Heart left ventricle (tissue), 16 donors: ENCODE measurements at regions of chr13 and their contacts with region 1.

Region 1: DNA sequence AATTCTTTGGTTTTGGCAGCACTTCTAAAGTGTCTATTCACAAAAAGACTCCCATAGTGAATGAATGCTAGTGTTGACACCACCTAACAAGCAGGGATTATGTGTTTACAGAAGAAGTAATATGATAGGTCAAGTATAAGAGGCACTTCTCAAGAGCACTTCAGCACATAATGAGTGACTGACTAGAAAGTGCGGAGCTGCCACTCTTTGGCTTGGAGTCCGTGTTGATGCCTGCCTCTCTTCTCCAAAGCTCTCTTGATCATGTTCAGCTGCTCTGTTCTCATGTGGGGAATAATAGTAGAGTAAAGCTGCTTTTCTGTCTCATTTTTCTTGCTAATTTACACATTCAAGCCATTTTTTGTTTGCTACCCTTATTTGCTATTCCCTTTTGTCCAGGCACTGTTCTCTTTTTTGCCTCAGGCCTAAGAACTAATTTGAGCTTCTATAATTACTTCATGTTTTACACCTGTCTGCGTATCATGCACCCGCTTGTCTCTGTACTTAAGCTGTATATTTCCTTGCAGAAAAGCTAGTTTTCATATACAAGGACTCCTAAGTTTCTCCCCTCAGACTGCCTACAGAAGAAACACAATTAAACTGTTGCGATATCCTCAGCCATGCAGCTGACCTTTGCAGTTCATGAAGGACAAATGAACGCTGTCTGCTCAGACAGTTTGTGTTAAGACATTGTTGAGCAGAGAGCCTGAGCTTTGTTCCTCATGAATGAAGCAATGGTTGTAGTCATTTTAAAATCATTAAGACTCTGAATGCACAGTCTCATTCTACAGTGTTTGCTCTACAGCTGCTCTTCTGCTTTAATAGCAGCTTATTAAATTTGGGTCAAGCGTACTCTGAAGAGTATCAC is 22.9 kb upstream of the MAB21L1 start:
- DNase-seq: peak in 1 of 5 donors; percentile 46
- ATAC-seq: peak; percentile 55 to 93 (median 80)
- H3K4me3 ChIP-seq: no peak overlapping the region
- H3K27ac ChIP-seq: no peak overlapping the region
- H3K4me1 ChIP-seq: peaks cover 0 to 13% (median 0%) of the 10 kb centered on the region in 12 donors
- H3K27me3 ChIP-seq: no peaks in the 10 kb centered on the region
- CTCF ChIP-seq: no peak
- POLR2A ChIP-seq: no peak

Region 2: DNA sequence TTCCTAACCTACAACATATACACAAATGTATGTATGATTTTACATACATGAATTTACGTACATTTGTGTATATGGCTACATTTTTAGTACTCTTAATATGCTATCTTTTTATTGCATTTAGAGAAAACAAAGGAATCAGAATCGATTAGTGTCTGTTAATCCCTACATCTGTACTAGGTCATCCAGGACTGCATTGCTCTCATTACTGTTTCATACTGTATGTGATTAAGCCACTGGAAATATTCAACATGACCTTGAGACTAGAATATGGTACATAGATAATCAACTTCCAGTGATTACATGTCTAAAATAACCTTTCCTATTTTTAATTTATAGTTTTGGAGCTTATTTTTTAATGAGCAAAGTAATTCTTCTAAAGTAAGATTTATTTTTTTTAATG is 17.7 kb before region 1 on chr13:
- intact Hi-C with region 1: loop called in 1 of 10 experiments (anchors 2 kb)
- DNase-seq: no peak
- ATAC-seq: no peak
- H3K4me3 ChIP-seq: no peak overlapping the region
- H3K27ac ChIP-seq: no peak overlapping the region
- H3K4me1 ChIP-seq: no peaks in the 10 kb centered on the region
- H3K27me3 ChIP-seq: peaks cover 0 to 23% (median 0%) of the 10 kb centered on the region in 9 donors
- CTCF ChIP-seq: no peak
- POLR2A ChIP-seq: no peak